Prostate gland (tissue), 2 donors: ENCODE measurements at regions of chr19 and their contacts with region 1.

Region 1: DNA sequence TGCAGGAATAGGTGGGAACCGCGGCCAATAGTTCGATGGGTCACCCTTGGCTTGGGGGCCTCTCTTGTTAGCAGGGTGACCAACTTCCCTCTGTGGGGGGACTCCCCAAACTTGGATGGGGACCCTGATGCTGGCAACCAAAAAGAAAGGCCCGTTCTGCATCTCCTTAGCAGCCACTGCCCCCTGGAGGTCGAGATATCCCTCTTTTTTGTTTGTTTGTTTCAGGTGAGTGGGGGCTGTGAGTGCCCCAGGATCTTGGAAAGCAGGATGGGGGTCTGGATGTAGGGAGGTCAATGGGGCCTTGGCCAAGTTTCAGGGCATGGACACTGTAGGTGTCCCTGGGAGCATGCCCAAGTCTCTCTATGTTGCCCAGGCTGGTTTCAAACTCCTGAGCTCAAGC is 7.7 kb upstream of the CRTC1 start:
- DNase-seq: no peak
- H3K4me3 ChIP-seq: no peak overlapping the region
- H3K27ac ChIP-seq: no peak overlapping the region
- H3K4me1 ChIP-seq: no peaks in the 10 kb centered on the region
- H3K27me3 ChIP-seq: no peaks in the 10 kb centered on the region
- CTCF ChIP-seq: peak in 1 of 4 experiments; percentile 8
- POLR2A ChIP-seq: no peak

Region 2: DNA sequence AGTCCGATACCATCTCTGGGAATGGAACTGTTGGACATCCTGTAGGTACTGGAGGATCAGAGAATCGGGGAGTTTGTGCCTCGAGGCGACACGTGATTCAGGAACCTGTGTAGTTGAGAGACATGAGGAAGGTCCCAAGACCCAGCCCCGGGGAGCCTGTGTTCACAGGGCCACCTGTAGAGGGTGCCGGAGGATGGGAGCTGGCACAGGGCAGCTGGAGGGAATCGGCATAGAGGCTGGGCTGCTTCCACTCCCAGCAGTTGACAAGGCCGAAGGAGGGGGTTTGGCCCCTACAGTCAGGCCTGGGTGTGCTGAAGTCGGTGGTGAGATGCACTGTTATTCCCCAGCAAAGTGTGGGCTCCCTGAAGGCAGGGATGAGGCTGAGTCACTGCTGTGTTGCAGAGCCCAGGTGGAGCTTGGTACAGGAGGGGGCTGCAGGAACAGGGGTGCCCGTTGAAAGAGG is 235.3 kb before region 1 on chr19:
- intact Hi-C with region 1: loop called (anchors 10 kb)
- DNase-seq: no peak
- H3K4me3 ChIP-seq: no peak overlapping the region
- H3K27ac ChIP-seq: no peak overlapping the region
- H3K4me1 ChIP-seq: peaks cover 2% of the 10 kb centered on the region
- H3K27me3 ChIP-seq: no peaks in the 10 kb centered on the region
- CTCF ChIP-seq: peak in 1 of 4 experiments; percentile 8
- POLR2A ChIP-seq: no peak

Region 3: GRCh38 chr19:18594096-18594823 is 81.5 kb before region 1 on chr19:
- intact Hi-C with region 1: loop called (anchors 5 kb)
- DNase-seq: peak; percentile 72
- H3K4me3 ChIP-seq: peak overlapping the region; percentile 20 to 35
- H3K27ac ChIP-seq: no peak overlapping the region
- H3K4me1 ChIP-seq: peaks cover 10% of the 10 kb centered on the region
- H3K27me3 ChIP-seq: no peaks in the 10 kb centered on the region
- CTCF ChIP-seq: peak; percentile 78 to 94 (median 90)
- POLR2A ChIP-seq: no peak